ENCODE measurements at regions of chr10 and their contacts with region 1.

Region 1: GRCh38 chr10:64486149-64486548 is 964.9 kb downstream of the REEP3 start:
- DNase-seq: no peak
- H3K4me3 Mint-ChIP-seq: no peak overlapping the region
- H3K27ac Mint-ChIP-seq: no peak overlapping the region
- H3K4me1 Mint-ChIP-seq: no peaks in the 10 kb centered on the region
- H3K27me3 Mint-ChIP-seq: no peaks in the 10 kb centered on the region

Region 2: DNA sequence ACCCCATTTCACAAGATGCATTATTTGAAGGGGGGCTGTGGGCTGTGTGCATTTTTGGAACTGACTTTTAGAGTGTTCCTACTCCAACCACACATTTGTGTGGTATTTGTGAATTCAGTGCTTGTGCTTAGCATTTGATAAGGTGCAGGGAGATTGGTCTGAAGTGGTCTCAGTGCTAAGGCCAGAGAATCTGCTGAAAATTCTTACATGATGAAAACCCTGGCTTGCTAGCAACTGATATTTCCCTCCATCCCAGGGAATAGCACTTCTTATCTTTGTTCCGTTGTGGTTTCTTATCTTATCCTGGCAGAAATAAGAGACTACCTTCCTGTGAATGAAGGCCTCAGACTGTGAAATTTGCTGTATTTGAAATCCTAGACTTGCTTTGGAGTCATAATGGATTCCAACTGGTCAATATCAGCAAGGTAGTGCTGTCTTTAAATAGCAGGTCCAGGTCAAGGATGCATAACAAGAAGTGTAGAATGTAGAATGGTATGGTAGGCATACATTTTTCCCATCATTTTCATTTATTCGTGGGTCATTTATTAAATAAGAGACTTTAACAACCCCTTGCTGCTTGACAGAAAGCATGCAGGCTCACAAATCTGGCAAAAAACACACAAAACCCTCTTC is 22.0 kb after region 1 on chr10:
- intact Hi-C with region 1: loop called (anchors 2 kb)
- DNase-seq: no peak
- H3K4me3 Mint-ChIP-seq: no peak overlapping the region
- H3K27ac Mint-ChIP-seq: no peak overlapping the region
- H3K4me1 Mint-ChIP-seq: no peaks in the 10 kb centered on the region
- H3K27me3 Mint-ChIP-seq: no peaks in the 10 kb centered on the region

Measured in activated CD4-positive, alpha-beta T cell treated with anti-CD3 and anti-CD28 coated beads, Interleukin-2, amount 10 ng/mL, durations not matched to agents 24 days and 14 days (primary cell).